ENCODE measurements at regions of chr17 and their contacts with region 1.

Region 1: DNA sequence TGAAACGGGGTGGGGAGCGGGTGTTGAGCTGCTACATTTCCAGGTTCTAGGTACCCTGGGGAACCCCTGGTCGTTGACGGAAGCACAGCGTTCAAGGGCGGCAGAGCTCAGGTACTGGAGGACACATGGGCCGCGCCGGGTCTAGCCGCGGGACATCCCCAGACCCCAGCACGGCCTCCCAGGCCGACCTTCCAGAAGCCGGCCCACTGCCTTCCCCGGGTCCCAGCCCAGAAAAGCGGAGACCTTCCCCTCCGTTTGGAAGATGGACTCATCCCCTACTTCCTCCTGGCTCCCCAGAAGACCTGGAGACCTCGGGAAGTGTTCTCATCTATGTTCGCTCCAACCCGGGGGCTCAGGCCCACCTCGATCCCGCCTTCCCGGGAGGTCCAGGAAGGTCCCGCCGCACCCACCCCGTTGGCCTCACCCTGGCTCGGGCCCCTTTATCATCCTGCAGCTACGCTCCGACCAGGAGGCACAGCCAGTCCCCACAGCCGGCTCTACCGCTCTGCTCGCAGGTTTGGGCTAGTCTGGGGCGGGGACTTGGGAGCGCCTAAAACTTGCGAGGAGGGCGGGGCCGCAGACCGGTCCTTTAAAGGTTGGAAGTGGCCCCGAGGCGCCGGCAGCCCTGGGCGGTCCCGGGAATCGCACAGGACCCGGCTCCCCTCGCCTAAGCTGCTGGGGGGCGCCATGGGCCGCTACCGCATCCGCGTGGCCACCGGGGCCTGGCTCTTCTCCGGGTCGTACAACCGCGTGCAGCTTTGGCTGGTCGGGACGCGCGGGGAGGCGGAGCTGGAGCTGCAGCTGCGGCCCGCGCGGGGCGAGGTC is at the start of gene ALOX12:
- DNase-seq: peak; percentile 43 to 65 (median 56)
- ATAC-seq: peak; percentile 76
- H3K4me3 ChIP-seq: no peak within 1 kb of the TSS
- H3K4me1 ChIP-seq: no peaks in the 10 kb centered on the region
- CTCF ChIP-seq: no peak
- total RNA-seq, gene ALOX12: 0.25 to 0.26 TPM in 2 of 3 donors, not detected in the other

Region 2: GRCh38 chr17:6666077-6666521 is 329.5 kb before region 1 on chr17:
- intact Hi-C with region 1: loop called in 1 of 2 experiments (anchors 10 kb)
- DNase-seq: peak in 2 of 3 donors; percentile 63 to 68
- ATAC-seq: peak; percentile 97
- H3K4me3 ChIP-seq: no peak overlapping the region
- H3K4me1 ChIP-seq: no peaks in the 10 kb centered on the region
- CTCF ChIP-seq: peak; percentile 67

Region 3: DNA sequence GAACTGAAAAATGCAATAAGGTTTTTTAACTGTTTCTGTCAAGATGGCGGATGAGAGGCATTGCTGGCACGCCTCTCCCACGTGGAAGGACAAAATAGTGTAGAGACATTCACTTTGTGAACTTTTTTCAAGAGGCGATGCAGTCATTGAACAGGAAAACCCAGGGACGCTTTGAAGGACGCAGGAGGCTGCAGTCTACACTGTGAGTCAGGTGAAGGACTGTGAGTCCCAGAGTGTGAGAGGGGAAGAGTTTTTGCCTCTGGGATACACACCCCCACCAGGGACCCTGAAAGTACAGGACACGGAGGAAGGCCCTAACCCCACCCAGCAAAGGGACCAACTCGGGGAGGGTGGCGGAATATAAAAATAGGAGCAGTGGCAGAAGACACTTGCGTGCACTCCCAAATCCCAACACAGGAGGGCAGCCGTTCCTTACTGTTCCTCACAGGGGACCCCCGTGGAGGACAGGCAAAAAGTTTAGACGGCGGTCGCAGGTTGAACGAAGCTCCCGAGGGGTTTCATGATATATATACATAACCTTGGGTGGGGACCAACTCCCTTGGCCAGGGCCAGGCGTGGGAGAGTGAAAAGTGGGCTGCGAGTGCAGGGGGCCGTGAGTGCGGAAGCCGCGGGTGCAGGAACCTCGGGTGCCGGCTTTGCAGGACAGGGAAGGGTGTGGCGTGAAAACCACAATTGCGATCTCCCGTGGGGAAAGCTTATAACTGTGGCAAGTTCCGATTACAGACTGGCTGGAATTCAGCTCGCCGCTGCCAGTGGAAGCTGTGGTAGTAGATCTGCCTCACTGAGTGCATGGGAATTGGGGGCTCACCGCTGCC is 81.8 kb before region 1 on chr17:
- intact Hi-C with region 1: loop called (anchors 5 kb)
- DNase-seq: peak in 2 of 3 donors; percentile 78 to 84
- ATAC-seq: peak; percentile 74
- H3K4me3 ChIP-seq: no peak overlapping the region
- H3K4me1 ChIP-seq: no peaks in the 10 kb centered on the region
- CTCF ChIP-seq: peak; percentile 68

Measured in mucosa of descending colon (tissue), 3 donors.